Endothelial cell of umbilical vein (primary cell): ENCODE measurements at regions of chr2 and their contacts with region 1.

Region 1: GRCh38 chr2:43340945-43341356 is 114.5 kb upstream of the ZFP36L2 start:
- DNase-seq: peak; percentile 93
- H3K4me3 ChIP-seq: no peak overlapping the region
- H3K27ac ChIP-seq: peak overlapping the region; percentile 87
- H3K4me1 ChIP-seq: peaks cover 50% of the 10 kb centered on the region
- H3K27me3 ChIP-seq: no peaks in the 10 kb centered on the region
- CTCF ChIP-seq: no peak
- POLR2A ChIP-seq: no peak

Region 2: GRCh38 chr2:42486145-42486906 is 854.6 kb before region 1 on chr2:
- CTCF ChIA-PET with region 1: no interaction called
- POLR2A ChIA-PET with region 1: no interaction called
- dilution Hi-C with region 1: no loop called
- intact Hi-C with region 1: no loop called
- DNase-seq: no peak
- H3K4me3 ChIP-seq: no peak overlapping the region
- H3K27ac ChIP-seq: no peak overlapping the region
- H3K4me1 ChIP-seq: no peaks in the 10 kb centered on the region
- H3K27me3 ChIP-seq: peaks cover 0 to 1% of the 10 kb centered on the region in 2 experiments
- CTCF ChIP-seq: no peak
- POLR2A ChIP-seq: no peak

Region 3: GRCh38 chr2:43467891-43468290 is 126.9 kb after region 1 on chr2:
- CTCF ChIA-PET with region 1: no interaction called
- POLR2A ChIA-PET with region 1: no interaction called
- dilution Hi-C with region 1: no loop called
- intact Hi-C with region 1: loop called (anchors 2 kb)
- DNase-seq: peak; percentile 78
- H3K4me3 ChIP-seq: no peak overlapping the region
- H3K27ac ChIP-seq: peak overlapping the region; percentile 83
- H3K4me1 ChIP-seq: peaks cover 26% of the 10 kb centered on the region
- H3K27me3 ChIP-seq: no peaks in the 10 kb centered on the region
- CTCF ChIP-seq: no peak
- POLR2A ChIP-seq: no peak